PC-9 (cell line): ENCODE measurements at regions of chr19 and their contacts with region 1.

Region 1: DNA sequence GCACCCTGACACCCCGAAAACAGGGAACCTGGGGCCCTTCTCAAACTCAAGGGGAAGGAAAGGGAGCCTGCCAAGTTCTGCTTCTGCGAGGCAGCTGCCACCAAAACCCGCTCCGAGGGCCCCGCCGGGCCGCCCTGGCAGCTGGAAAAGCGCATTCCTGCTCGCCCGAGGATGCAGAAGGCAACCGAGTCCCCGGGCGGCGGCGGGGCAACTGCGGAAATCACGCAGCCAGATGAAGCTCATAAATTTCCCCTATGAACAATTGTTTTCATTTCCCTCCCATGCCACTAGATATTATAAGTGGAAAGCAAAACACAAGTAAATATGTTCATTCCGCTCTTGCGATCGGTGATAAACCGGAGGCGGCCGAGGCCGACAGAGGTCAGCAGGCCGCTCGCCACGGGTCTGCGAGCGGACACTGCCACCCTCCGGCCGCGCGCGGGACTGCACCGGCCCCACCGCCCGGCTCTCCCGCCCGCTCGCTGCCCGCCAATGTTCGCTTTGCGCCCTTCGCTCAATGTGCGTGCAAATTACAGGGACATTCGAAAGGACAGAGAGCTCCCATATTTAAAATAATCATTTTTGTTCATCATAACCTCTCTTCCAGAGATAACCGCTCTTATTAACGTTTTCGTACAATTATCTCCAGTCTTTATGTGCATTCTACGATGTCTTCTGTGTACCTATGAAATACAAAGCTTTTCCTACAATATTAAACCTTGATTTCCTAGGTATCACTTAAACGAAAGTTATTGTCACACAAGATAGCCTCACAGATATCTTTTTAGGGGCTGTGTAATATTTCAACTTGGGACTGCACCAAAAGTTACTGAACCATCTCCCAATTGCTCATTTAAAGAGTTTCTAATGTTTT is 120.8 kb upstream of the ZNF507 start:
- DNase-seq: peak in 1 of 2 experiments; percentile 62
- H3K4me3 ChIP-seq: no peak overlapping the region
- H3K27ac ChIP-seq: no peak overlapping the region
- H3K4me1 ChIP-seq: no peaks in the 10 kb centered on the region
- H3K27me3 ChIP-seq: peaks cover 41% of the 10 kb centered on the region
- CTCF ChIP-seq: peak; percentile 94

Region 2: DNA sequence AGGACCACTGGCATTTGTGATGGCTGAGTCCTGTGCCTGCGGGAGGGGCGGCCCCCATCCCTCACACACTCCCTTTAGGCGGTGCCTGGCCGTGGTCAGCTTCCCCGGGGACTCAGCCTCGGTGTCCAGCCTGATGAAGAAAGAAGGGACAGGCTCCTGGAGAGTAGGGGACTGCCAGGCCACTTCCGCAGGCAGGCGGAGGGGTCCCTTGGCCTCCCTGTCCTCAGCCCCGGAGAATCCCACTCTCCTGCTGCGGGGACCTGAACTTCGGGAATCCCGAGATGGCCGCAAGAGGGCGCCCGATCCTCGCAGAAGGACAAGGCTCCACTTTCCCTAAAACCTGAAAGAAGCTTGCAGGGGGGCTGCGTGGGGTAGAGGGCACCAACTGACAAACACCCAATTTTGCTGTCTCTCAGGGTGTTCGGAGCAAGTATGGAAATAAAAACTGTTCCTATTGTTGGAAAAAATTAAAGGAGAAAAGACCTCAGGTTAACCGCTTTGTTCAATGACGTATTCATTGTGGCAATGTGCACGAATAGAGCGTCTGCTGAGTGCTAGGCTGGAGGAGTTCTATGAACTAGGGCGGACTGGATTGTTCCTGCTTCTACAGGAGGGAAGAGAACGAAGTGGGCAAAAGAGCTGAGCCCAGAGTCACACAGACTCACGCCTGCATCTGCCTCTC is 1555.1 kb before region 1 on chr19:
- CTCF ChIA-PET with region 1: no interaction called
- POLR2A ChIA-PET with region 1: no interaction called
- intact Hi-C with region 1: loop called (anchors 5 kb)
- DNase-seq: peak in 1 of 2 experiments; percentile 28
- H3K4me3 ChIP-seq: no peak overlapping the region
- H3K27ac ChIP-seq: no peak overlapping the region
- H3K4me1 ChIP-seq: no peaks in the 10 kb centered on the region
- H3K27me3 ChIP-seq: peaks cover 60% of the 10 kb centered on the region
- CTCF ChIP-seq: peak; percentile 81

Region 3: DNA sequence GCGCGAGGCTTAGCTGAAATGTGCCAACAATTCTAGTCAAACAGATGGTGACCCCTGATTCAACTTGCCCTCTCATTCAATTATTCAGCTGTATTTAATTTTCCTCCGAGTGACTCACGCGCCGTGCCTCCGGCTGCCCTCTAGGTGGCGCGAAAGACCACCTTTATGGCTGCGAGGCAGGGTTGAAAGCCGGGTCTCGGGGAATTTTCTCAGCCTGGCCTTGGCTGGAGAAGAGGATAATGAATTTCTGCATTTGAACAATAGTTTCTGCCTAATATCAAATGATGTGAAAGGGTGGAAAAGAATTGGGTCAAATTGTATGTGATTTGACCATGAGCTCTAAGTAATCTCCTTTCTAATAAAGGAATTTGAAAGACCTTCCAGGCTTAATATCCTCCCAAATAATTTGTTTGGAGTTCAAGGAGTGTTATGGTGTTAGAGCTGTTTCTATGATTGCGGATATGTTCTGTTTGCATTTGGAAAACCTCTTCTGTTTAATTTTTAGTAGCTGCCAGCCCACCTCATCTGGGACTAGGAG is 1541.5 kb before region 1 on chr19:
- CTCF ChIA-PET with region 1: interaction called, 3 read pairs
- POLR2A ChIA-PET with region 1: no interaction called
- intact Hi-C with region 1: loop called (anchors 5 kb)
- DNase-seq: peak; percentile 49 to 54
- H3K4me3 ChIP-seq: no peak overlapping the region
- H3K27ac ChIP-seq: no peak overlapping the region
- H3K4me1 ChIP-seq: no peaks in the 10 kb centered on the region
- H3K27me3 ChIP-seq: peaks cover 70% of the 10 kb centered on the region
- CTCF ChIP-seq: peak; percentile 91

Region 4: GRCh38 chr19:30784850-30785457 is 1439.7 kb before region 1 on chr19:
- CTCF ChIA-PET with region 1: no interaction called
- POLR2A ChIA-PET with region 1: no interaction called
- intact Hi-C with region 1: loop called (anchors 10 kb)
- DNase-seq: peak in 1 of 2 experiments; percentile 17
- H3K4me3 ChIP-seq: no peak overlapping the region
- H3K27ac ChIP-seq: no peak overlapping the region
- H3K4me1 ChIP-seq: no peaks in the 10 kb centered on the region
- H3K27me3 ChIP-seq: 0 out of 2 replicates have a peak, but pooled peaks cover 8% of the 10 kb centered on the region
- CTCF ChIP-seq: peak; percentile 65

Region 5: GRCh38 chr19:31338069-31338776 is 886.4 kb before region 1 on chr19:
- CTCF ChIA-PET with region 1: interaction called, 15 read pairs
- POLR2A ChIA-PET with region 1: no interaction called
- intact Hi-C with region 1: no loop called
- DNase-seq: no peak
- H3K4me3 ChIP-seq: no peak overlapping the region
- H3K27ac ChIP-seq: no peak overlapping the region
- H3K4me1 ChIP-seq: no peaks in the 10 kb centered on the region
- H3K27me3 ChIP-seq: peaks cover 85% of the 10 kb centered on the region
- CTCF ChIP-seq: peak; percentile 31; the same call in 1 of the 2 replicates

Region 6: GRCh38 chr19:32123355-32123940 is 101.2 kb before region 1 on chr19:
- CTCF ChIA-PET with region 1: no interaction called
- POLR2A ChIA-PET with region 1: no interaction called
- intact Hi-C with region 1: no loop called
- DNase-seq: no peak
- H3K4me3 ChIP-seq: no peak overlapping the region
- H3K27ac ChIP-seq: no peak overlapping the region
- H3K4me1 ChIP-seq: no peaks in the 10 kb centered on the region
- H3K27me3 ChIP-seq: peaks cover 38% of the 10 kb centered on the region
- CTCF ChIP-seq: no peak